HAP-1 (cell line): ENCODE measurements at regions of chr11 and their contacts with region 1.

Region 1: DNA sequence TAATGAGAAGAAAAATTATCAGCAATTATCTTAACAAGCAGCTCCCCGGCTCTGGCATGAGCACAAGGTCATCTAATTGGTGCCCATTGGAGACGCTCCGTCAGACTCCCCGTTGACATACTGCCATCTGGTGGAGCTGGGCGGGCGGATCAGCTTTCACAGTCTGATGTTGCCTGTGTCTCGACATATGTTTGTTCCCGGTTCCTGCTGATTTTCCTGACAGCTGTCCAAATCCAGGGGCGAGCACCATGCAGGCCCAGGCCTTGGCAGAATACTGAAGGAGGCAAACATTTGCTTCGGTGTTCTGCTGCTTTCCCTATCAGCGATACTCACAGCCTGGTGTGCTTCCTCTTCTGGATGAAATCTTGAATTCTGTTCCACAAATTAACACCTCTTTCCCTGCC is 43.8 kb upstream of the BARX2 start:
- DNase-seq: peak; percentile 64 to 88
- H3K4me3 ChIP-seq: no peak overlapping the region
- H3K4me1 ChIP-seq: no peaks in the 10 kb centered on the region
- H3K27me3 ChIP-seq: no peaks in the 10 kb centered on the region

Region 2: DNA sequence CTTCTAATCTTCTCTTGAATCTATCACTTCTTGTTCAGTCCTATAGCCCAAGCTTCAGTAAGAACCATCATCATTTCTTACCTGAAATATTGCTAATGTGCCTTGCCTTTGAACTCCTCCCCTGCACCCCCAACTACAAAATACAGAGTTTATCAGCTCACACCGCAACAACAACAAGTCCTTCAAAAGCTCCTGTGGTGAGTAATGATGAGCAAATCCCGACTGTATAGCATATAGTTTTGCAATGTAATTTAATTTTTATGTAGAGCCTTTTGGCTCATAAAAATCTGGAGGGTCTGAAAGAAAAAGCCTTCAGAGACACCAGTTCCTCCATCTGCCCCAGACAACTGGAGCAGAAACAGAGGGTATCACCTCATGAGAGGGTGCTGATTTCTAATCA is 264.4 kb before region 1 on chr11:
- in situ Hi-C with region 1: no loop called
- DNase-seq: no peak
- H3K4me3 ChIP-seq: no peak overlapping the region
- H3K4me1 ChIP-seq: peaks cover 16% of the 10 kb centered on the region
- H3K27me3 ChIP-seq: no peaks in the 10 kb centered on the region

Region 3: GRCh38 chr11:129109701-129110100 is 222.2 kb before region 1 on chr11:
- in situ Hi-C with region 1: loop called (anchors 5 kb)
- DNase-seq: no peak
- H3K4me3 ChIP-seq: no peak overlapping the region
- H3K4me1 ChIP-seq: no peaks in the 10 kb centered on the region
- H3K27me3 ChIP-seq: no peaks in the 10 kb centered on the region

Region 4: GRCh38 chr11:129267716-129268115 is 64.2 kb before region 1 on chr11:
- in situ Hi-C with region 1: no loop called
- DNase-seq: no peak
- H3K4me3 ChIP-seq: no peak overlapping the region
- H3K4me1 ChIP-seq: no peaks in the 10 kb centered on the region
- H3K27me3 ChIP-seq: no peaks in the 10 kb centered on the region